OCI-LY7 (cell line): ENCODE measurements at regions of chr4 and their contacts with region 1.

Region 1: DNA sequence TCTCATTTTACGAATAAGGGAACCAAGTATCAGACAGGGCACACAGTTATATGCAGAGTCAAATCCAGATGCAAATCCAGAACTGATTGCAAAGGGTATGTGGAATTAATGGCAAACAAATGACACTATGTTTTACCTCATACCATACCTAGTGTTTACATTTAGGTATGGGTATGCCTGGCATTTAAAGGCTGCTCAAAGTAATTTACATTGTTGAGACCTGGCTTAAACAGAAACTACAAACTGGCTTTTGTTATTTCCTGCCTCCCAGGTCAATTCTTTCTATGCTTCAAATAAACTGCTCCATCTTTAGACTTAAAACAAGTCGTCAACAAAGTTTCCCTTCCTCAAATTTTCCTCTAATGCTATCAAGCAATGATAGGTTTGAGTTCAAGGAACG is 33.7 kb downstream of the ANKRD17 start:
- DNase-seq: no peak
- H3K4me3 ChIP-seq: no peak overlapping the region
- H3K27ac ChIP-seq: peak overlapping the region; percentile 3
- H3K4me1 ChIP-seq: peaks cover 31% of the 10 kb centered on the region
- CTCF ChIP-seq: no peak

Region 2: GRCh38 chr4:73086095-73086868 is 138.6 kb before region 1 on chr4:
- CTCF ChIA-PET with region 1: no interaction called
- POLR2A ChIA-PET with region 1: no interaction called
- intact Hi-C with region 1: loop called (anchors 5 kb)
- DNase-seq: peak; percentile 10
- H3K4me3 ChIP-seq: no peak overlapping the region
- H3K27ac ChIP-seq: peak overlapping the region; percentile 48
- H3K4me1 ChIP-seq: peaks cover 22% of the 10 kb centered on the region
- CTCF ChIP-seq: no peak